ENCODE measurements at regions of chr1 and their contacts with region 1.

Region 1: DNA sequence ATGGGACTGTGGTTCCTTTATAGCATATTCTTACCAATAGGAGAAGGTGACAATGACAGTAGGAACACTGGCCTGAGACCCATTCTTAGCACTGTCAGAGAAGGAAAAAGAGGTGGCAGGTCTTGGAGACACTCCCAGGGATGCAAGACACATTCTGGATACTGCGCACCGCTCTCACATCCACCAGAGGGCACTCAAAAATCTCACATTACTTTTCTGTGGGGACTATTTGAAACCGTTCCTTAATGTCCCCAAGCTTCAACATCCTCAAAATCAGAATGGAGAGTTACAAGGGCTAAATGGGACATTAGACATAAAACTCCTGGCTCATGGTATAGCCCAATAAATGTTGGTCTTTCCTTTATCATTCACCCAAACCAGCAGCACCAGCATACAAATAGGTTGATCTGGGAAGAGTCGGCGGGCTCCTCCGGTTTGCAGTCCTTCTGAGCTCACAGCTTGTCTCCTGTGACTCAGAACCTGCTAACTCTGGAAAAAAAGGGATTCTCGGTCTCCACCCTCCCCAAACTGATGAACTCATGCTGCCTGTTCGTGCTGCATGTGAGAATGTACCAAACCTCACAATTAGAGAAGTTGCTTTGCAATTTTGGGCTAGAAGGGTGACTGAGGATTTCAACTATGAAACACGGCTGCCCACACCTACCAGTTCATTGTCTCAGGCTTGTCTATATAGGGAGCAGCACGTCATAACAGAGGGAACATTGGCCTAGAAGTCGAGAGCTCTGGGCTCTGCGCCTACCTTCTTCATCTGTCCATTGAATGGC is 40.2 kb downstream of the IL12RB2 start:
- DNase-seq: peak; percentile 42
- ATAC-seq: peak; percentile 85

Region 2: DNA sequence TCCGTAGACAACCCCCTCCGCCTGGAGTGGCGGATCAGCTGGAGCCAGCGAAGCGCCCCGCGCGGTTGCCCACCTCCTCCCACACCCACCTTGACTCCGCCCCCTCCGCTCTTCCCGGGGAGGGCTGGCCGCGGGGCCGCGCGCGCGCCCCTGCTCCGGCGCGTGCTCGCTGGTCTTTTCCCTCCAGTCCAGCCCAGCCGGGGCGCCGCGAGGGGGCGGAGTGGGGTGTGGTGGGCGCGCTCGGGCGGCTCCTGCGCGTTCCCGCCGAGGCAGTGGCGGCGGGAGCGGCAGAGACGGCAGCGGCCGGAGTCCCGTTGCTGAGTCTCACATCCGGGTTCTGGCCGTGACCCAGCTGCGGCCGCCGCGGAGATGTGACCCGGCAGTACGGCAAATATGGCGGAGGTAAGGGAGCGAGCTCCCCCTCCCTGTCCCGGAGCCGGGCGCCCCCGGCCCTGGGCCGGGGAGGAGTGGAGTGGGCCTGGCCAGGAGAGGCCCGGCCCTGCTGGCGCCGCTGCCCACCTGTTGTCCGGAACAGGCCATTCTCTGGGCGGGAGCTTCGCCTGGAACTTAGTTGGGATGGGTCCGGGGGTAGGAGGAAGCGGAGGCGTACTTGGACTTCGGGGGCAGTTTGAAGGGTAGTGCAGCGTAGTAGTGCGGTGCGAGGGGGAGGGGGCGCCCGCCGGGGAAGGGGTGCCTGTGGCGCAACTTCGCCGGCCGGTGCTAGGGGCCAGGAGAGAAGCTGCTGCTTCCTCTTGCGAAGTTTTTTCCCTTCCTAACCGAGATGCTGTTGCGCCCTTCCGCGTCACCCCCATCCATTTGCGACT is 417.7 kb before region 1 on chr1:
- intact Hi-C with region 1: no loop called
- DNase-seq: peak; percentile 98
- ATAC-seq: peak; percentile 90

Region 3: DNA sequence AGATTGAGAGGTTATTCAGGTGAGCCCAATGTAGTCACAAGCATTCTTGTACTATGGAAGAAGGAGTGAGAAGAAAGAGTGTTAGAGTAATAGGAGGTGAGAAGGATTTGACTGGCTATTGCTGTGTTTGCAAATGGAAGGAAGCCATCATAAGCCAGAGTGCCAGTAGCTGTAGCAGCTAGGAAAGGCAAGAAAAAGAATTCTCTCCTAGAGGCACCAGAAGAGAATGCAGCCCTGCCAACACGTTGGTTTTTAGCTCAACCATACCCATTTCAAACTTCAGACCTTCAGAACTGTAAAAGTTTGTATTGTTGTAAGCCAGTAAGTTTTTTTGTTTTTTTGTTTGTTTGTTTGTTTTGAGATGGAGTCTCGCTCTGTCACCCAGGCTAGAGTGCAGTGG is 49.1 kb before region 1 on chr1:
- intact Hi-C with region 1: no loop called
- DNase-seq: no peak
- ATAC-seq: no peak

Region 4: GRCh38 chr1:67489643-67490042 is 141.8 kb after region 1 on chr1:
- intact Hi-C with region 1: loop called (anchors 5 kb)
- DNase-seq: no peak
- ATAC-seq: peak; percentile 86

Region 5: DNA sequence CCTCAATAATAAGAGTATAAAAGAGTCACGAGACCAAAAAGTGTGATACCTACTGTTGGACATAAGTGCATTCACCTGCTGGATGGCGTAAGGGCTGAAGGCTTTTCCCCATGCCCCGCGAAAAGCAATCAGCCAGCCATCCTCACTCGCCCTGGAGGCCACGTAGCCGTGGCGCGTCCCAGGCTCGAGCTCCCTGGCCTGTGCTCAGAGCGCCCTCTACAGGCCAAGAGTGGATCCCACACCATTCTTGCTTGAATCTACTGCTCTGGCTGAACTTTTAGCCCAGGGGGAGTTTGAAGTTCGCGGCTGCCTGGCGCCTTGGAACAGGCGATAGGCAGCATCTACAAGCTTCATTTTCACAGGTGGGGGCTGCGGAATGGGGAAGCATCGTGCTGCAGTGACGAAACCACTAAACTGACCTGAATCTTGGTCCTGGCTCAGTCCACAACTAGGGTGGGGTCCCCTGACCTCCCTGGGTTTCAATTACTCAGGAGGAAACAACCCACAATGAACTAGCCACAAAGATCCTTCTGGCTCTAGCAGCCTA is 152.6 kb after region 1 on chr1:
- intact Hi-C with region 1: loop called (anchors 5 kb)
- DNase-seq: peak; percentile 88
- ATAC-seq: peak; percentile 95